CD8-positive, alpha-beta T cell (primary cell): ENCODE measurements at regions of chr2 and their contacts with region 1.

Region 1: GRCh38 chr2:54723131-54723995 is at the start of gene EML6:
- DNase-seq: peak; percentile 95 to 99 (median 98)
- ATAC-seq: peak; percentile 95
- H3K4me3 ChIP-seq: peak within 1 kb of the TSS; percentile 70 to 72
- H3K4me3 Mint-ChIP-seq: peak within 1 kb of the TSS; percentile 93
- H3K27ac ChIP-seq: peak within 1 kb of the TSS; percentile 43 to 53
- H3K27ac Mint-ChIP-seq: peak within 1 kb of the TSS; percentile 69
- H3K4me1 ChIP-seq: peaks cover 12% of the 10 kb centered on the region
- H3K4me1 Mint-ChIP-seq: peaks cover 17% of the 10 kb centered on the region
- H3K27me3 ChIP-seq: peaks cover 0 to 11% of the 10 kb centered on the region in 2 experiments
- H3K27me3 Mint-ChIP-seq: peaks cover 27% of the 10 kb centered on the region
- CTCF ChIP-seq: no peak
- total RNA-seq, gene EML6: 0.35 to 0.81 TPM

Region 2: DNA sequence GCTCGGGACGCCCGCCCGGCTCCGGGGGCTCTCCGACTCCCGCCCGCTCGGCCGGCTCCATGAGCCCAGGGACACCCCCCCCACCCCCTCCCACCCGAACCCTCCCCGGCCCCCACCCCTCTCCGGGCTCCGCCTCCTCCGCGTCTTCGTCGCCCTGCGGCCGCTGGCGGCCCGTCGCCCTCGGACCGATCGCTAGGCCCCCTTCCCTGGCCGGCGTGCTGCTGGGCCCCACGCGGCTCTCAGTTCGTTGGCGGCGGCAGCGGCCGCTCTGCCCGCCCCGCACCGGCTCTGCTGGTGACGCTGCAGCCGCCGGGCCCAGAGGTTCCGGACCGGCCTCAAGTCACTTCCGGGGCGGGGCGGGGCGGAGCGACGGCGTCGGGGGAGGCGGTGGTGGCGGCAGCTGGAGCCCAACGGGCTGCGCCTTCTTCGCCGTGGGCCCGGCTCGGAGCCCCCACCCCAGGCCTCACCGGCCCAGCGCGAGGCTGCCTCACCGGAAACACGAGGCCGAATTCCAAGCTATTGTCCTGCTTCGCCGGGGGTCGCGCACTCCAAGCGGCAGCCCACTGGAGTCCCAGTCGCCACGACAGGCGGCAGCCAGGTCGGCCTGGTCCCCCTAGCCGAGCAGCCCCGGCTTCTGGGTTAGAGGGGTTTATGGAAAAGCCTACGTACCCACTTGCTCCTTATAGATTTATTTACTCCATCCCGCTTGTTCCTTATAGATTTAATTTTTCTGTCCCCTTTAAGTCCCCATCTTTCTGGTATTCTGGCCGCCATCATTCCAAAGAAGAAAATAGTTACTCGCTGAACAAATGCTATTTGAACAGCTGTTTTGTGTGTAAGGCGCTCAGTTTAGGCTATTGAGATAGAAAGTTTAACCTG is 752.4 kb before region 1 on chr2 and contains the start of gene PSME4:
- CTCF ChIA-PET with region 1: no interaction called
- POLR2A ChIA-PET with region 1: no interaction called
- intact Hi-C with region 1: loop called (anchors 10 kb)
- DNase-seq: peak; percentile 88 to 97 (median 93)
- ATAC-seq: peak; percentile 90
- H3K4me3 ChIP-seq: peak within 1 kb of the TSS; percentile 78 to 99
- H3K4me3 Mint-ChIP-seq: peak within 1 kb of the TSS; percentile 95
- H3K27ac ChIP-seq: peak within 1 kb of the TSS; percentile 83 to 92
- H3K27ac Mint-ChIP-seq: peak within 1 kb of the TSS; percentile 98
- H3K4me1 ChIP-seq: peaks cover 25% of the 10 kb centered on the region
- H3K4me1 Mint-ChIP-seq: peaks cover 56% of the 10 kb centered on the region
- H3K27me3 ChIP-seq: no peaks in the 10 kb centered on the region
- H3K27me3 Mint-ChIP-seq: no peaks in the 10 kb centered on the region
- CTCF ChIP-seq: no peak
- total RNA-seq, gene PSME4: 98.8 to 107 TPM

Region 3: DNA sequence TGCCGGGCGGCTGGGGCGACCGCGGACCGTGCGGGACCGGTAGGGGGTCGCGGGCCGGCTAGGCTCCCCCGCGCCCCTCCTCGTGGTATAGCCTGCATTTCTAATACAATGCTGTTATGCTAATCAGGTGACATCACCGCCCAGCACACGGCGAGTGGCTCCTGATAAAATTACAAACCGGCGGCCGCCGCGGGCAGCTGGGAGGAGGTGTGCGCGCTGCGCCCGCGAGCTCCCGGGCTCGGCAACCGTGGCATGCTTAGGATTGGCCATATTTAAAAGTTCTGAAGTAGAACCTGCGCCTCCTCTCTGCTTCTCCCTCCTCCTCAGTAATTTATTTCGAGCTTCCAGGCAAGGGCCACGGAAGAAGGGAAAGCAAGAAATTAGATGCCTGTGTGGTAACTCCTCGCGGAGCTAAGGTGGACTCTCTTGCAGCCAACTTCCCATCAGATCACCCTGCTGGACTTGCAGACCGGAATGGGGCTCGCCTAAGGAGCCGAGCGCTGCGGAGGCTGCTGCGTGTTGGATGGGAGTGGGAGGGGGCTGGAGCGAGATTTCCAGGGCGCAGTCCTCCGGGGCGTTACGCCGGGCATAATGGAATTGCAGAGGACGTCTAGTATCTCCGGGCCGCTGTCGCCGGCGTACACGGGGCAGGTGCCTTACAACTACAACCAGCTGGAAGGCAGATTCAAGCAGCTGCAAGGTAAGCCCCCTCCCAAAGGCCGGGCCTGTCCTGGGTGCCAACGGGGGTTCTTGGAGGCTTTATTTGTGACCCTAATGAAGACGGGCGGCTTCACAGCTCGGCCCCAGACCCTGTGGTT is 165.0 kb before region 1 on chr2:
- CTCF ChIA-PET with region 1: no interaction called
- POLR2A ChIA-PET with region 1: interaction called, 6 read pairs
- intact Hi-C with region 1: loop called in 1 of 2 experiments (anchors 2 kb)
- DNase-seq: peak; percentile 43 to 85 (median 69)
- ATAC-seq: peak; percentile 67
- H3K4me3 ChIP-seq: peak overlapping the region; percentile 92 to 94
- H3K4me3 Mint-ChIP-seq: peak overlapping the region; percentile 98
- H3K27ac ChIP-seq: peak overlapping the region; percentile 81 to 82
- H3K27ac Mint-ChIP-seq: peak overlapping the region; percentile 93
- H3K4me1 ChIP-seq: peaks cover 35% of the 10 kb centered on the region
- H3K4me1 Mint-ChIP-seq: peaks cover 64% of the 10 kb centered on the region
- H3K27me3 ChIP-seq: no peaks in the 10 kb centered on the region
- H3K27me3 Mint-ChIP-seq: no peaks in the 10 kb centered on the region
- CTCF ChIP-seq: no peak

Region 4: DNA sequence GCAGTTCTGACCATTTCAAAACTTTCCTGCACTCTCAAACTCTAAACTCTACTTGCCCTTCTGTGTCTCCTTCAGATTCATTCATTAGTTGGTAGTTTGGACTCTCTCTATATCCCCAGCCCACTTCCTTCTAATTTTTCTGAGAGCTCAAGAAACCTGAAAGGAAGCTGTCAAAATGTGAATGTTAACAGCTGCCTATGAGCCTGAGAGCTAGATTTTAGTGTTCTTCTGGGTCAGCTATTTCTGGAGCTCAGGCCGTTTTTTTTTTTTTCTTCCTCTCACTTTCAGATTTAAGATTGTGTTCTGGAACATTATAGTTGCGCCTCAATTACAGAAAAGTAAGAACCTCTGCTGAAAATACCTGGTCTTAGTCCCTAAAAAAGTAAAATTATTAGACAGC is 253.8 kb after region 1 on chr2:
- CTCF ChIA-PET with region 1: no interaction called
- POLR2A ChIA-PET with region 1: no interaction called
- intact Hi-C with region 1: no loop called
- DNase-seq: no peak
- ATAC-seq: no peak
- H3K4me3 ChIP-seq: no peak overlapping the region
- H3K4me3 Mint-ChIP-seq: no peak overlapping the region
- H3K27ac ChIP-seq: no peak overlapping the region
- H3K27ac Mint-ChIP-seq: peak overlapping the region; percentile 63
- H3K4me1 ChIP-seq: no peaks in the 10 kb centered on the region
- H3K4me1 Mint-ChIP-seq: peaks cover 47% of the 10 kb centered on the region
- H3K27me3 ChIP-seq: no peaks in the 10 kb centered on the region
- H3K27me3 Mint-ChIP-seq: no peaks in the 10 kb centered on the region
- CTCF ChIP-seq: no peak

Region 5: GRCh38 chr2:55010149-55010591 is 286.8 kb after region 1 on chr2:
- CTCF ChIA-PET with region 1: no interaction called
- POLR2A ChIA-PET with region 1: no interaction called
- intact Hi-C with region 1: loop called (anchors 5 to 10 kb)
- DNase-seq: peak; percentile 7 to 79 (median 54)
- ATAC-seq: peak; percentile 95
- H3K4me3 ChIP-seq: peak overlapping the region; percentile 24 to 43
- H3K4me3 Mint-ChIP-seq: peak overlapping the region; percentile 93
- H3K27ac ChIP-seq: peak overlapping the region; percentile 40 to 45
- H3K27ac Mint-ChIP-seq: peak overlapping the region; percentile 95
- H3K4me1 ChIP-seq: peaks cover 61% of the 10 kb centered on the region
- H3K4me1 Mint-ChIP-seq: peaks cover 77% of the 10 kb centered on the region
- H3K27me3 ChIP-seq: no peaks in the 10 kb centered on the region
- H3K27me3 Mint-ChIP-seq: no peaks in the 10 kb centered on the region
- CTCF ChIP-seq: no peak

Region 6: DNA sequence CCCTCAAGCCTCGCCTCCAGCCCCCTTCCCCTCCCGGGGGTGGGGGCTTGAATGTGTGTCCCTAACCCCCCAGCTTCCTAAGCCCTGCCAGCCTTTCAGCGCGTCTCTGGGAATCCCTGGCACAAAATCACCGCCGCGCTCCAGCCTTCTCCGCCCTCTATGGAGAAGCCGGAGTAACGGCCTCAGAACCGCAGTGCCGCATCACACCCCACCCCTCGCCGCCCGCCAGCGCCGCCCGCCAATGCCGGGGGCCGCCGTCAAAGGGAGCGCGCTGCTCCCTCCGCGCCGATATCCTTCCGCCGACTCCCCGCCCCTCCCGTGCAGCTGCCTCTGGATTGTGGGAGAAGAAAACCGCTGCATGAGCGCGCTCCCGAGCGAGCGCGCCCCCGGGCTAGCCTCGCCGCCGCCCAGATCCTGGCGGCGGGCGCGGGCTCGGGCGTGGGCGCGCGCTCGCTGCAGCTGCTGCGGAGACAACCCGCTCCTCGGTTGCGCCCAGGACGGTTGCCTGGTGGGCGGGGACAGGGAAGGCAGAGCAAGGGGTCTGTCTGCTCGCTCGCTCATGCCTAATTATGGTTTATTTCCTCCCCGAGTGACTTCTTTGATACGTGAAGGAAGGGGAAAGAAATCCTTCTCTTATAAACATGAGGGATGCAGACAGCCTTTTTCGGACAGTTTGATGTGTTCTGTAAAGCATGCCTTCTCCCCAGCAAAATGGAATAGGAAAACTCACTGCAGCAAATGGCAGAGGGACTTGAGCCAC is 696.5 kb after region 1 on chr2 and contains the start of gene CCDC88A:
- CTCF ChIA-PET with region 1: no interaction called
- POLR2A ChIA-PET with region 1: no interaction called
- intact Hi-C with region 1: loop called in 1 of 2 experiments (anchors 5 kb)
- DNase-seq: peak; percentile 71 to 96 (median 85)
- ATAC-seq: peak; percentile 80
- H3K4me3 ChIP-seq: peak within 1 kb of the TSS; percentile 75 to 93
- H3K4me3 Mint-ChIP-seq: peak within 1 kb of the TSS; percentile 92
- H3K27ac ChIP-seq: peak within 1 kb of the TSS; percentile 57 to 83
- H3K27ac Mint-ChIP-seq: peak within 1 kb of the TSS; percentile 87
- H3K4me1 ChIP-seq: peaks cover 14% of the 10 kb centered on the region
- H3K4me1 Mint-ChIP-seq: peaks cover 38% of the 10 kb centered on the region
- H3K27me3 ChIP-seq: no peaks in the 10 kb centered on the region
- H3K27me3 Mint-ChIP-seq: peaks cover 4% of the 10 kb centered on the region
- CTCF ChIP-seq: no peak
- total RNA-seq, gene CCDC88A: 9.5 to 12.3 TPM

Region 7: GRCh38 chr2:55693181-55694134 is 970.1 kb after region 1 on chr2 and contains the start of gene PNPT1:
- CTCF ChIA-PET with region 1: no interaction called
- POLR2A ChIA-PET with region 1: no interaction called
- intact Hi-C with region 1: loop called (anchors 10 kb)
- DNase-seq: peak; percentile 84 to 95 (median 92)
- ATAC-seq: peak; percentile 100
- H3K4me3 ChIP-seq: peak within 1 kb of the TSS; percentile 90 to 98
- H3K4me3 Mint-ChIP-seq: peak within 1 kb of the TSS; percentile 98
- H3K27ac ChIP-seq: peak within 1 kb of the TSS; percentile 59 to 66
- H3K27ac Mint-ChIP-seq: peak within 1 kb of the TSS; percentile 93
- H3K4me1 ChIP-seq: peaks cover 12% of the 10 kb centered on the region
- H3K4me1 Mint-ChIP-seq: peaks cover 40% of the 10 kb centered on the region
- H3K27me3 ChIP-seq: no peaks in the 10 kb centered on the region
- H3K27me3 Mint-ChIP-seq: no peaks in the 10 kb centered on the region
- CTCF ChIP-seq: no peak
- total RNA-seq, gene PNPT1: 12.8 to 13.9 TPM